Activated CD4-positive, alpha-beta memory T cell treated with anti-CD3 and anti-CD28 coated beads for 36 hours (primary cell): ENCODE measurements at regions of chr4 and their contacts with region 1.

Region 1: GRCh38 chr4:38310446-38311043 is 350.3 kb downstream of the PTTG2 start:
- DNase-seq: peak; percentile 86
- H3K4me3 Mint-ChIP-seq: peak overlapping the region; percentile 12
- H3K27ac Mint-ChIP-seq: peak overlapping the region; percentile 72
- H3K4me1 Mint-ChIP-seq: peaks cover 68% of the 10 kb centered on the region
- H3K27me3 Mint-ChIP-seq: peaks cover 15% of the 10 kb centered on the region

Region 2: DNA sequence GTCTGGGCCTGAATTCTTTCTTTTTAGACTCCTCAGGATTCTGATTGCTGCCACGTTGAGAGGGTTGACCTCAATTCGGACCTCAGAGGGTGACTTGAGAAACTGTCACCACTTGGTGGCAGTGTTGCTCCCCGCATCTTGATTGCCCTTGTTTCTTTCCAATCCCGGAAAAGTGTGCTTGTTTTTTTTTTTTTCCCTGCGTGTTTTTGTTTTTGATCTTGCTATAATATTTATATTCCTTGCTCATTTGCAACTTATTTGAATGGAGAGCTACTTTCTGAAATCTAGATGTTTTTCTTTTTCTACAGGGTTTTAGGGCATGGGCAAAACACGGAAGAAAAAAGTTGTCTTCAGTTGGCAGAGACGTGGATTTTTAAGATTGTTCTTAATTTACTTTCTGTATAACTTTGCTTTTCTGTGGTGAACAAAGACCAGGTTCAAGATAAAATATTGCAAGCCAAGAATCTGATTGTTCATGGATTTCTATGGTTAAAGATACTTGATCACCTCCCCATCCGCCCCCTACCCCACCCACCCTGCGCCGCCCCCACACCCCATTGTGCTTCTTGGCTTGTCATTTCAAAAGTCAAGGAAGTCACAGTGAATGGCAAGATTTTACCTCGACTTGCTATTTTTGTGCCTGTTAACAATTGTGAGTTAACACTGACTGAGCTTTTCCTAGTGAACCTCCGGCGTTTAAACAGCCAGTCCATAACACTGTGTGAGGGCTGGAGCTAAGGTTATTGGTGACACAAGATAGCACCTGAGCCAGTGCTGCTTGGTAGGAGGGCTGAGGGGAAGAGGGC is 248.3 kb before region 1 on chr4:
- CTCF ChIA-PET with region 1: interaction called, 5 read pairs
- POLR2A ChIA-PET with region 1: no interaction called
- intact Hi-C with region 1: loop called (anchors 1 kb)
- DNase-seq: peak; percentile 80
- H3K4me3 Mint-ChIP-seq: peak overlapping the region; percentile 77
- H3K27ac Mint-ChIP-seq: peak overlapping the region; percentile 70
- H3K4me1 Mint-ChIP-seq: peaks cover 14% of the 10 kb centered on the region
- H3K27me3 Mint-ChIP-seq: no peaks in the 10 kb centered on the region

Region 3: GRCh38 chr4:38334810-38335537 is 24.4 kb after region 1 on chr4:
- CTCF ChIA-PET with region 1: no interaction called
- POLR2A ChIA-PET with region 1: no interaction called
- intact Hi-C with region 1: loop called (anchors 1 kb)
- DNase-seq: no peak
- H3K4me3 Mint-ChIP-seq: no peak overlapping the region
- H3K27ac Mint-ChIP-seq: no peak overlapping the region
- H3K4me1 Mint-ChIP-seq: peaks cover 32% of the 10 kb centered on the region
- H3K27me3 Mint-ChIP-seq: peaks cover 30% of the 10 kb centered on the region

Region 4: DNA sequence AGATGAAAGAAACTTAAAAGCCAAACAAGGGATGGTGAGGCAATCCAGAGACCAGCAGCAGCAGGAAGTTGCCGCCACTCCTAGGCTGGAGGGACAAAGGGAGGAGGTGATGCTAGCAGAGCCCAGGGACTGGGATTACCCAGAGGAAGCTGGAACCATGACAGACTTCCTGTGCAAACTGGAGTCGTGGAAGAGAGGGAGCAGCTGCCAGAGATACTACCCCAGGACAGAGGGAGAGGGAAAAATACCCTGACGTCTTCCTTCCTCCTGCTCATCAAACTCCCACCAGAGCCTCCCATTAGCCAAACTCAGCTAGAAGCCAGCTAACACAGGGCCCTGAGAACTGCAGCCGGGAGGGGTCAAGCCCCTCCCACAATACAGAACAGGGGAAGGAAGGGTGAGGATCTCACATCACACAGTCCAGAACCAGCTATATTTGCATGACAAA is 252.2 kb after region 1 on chr4:
- CTCF ChIA-PET with region 1: no interaction called
- POLR2A ChIA-PET with region 1: interaction called, 13 read pairs
- intact Hi-C with region 1: loop called (anchors 2 kb)
- DNase-seq: no peak
- H3K4me3 Mint-ChIP-seq: no peak overlapping the region
- H3K27ac Mint-ChIP-seq: no peak overlapping the region
- H3K4me1 Mint-ChIP-seq: peaks cover 20% of the 10 kb centered on the region
- H3K27me3 Mint-ChIP-seq: peaks cover 18% of the 10 kb centered on the region

Region 5: GRCh38 chr4:38675146-38676121 is 364.9 kb after region 1 on chr4:
- CTCF ChIA-PET with region 1: interaction called, 15 read pairs
- POLR2A ChIA-PET with region 1: no interaction called
- intact Hi-C with region 1: no loop called
- DNase-seq: peak; percentile 89
- H3K4me3 Mint-ChIP-seq: peak overlapping the region; percentile 22
- H3K27ac Mint-ChIP-seq: peak overlapping the region; percentile 19
- H3K4me1 Mint-ChIP-seq: peaks cover 79% of the 10 kb centered on the region
- H3K27me3 Mint-ChIP-seq: no peaks in the 10 kb centered on the region

Region 6: GRCh38 chr4:39032218-39033085 is 721.9 kb after region 1 on chr4 and contains the start of gene TMEM156:
- CTCF ChIA-PET with region 1: no interaction called
- POLR2A ChIA-PET with region 1: no interaction called
- intact Hi-C with region 1: loop called (anchors 5 kb)
- DNase-seq: peak; percentile 71
- H3K4me3 Mint-ChIP-seq: peak within 1 kb of the TSS; percentile 78
- H3K27ac Mint-ChIP-seq: peak within 1 kb of the TSS; percentile 87
- H3K4me1 Mint-ChIP-seq: peaks cover 47% of the 10 kb centered on the region
- H3K27me3 Mint-ChIP-seq: no peaks in the 10 kb centered on the region
- total RNA-seq, gene TMEM156: 28.0 to 28.4 TPM

Region 7: DNA sequence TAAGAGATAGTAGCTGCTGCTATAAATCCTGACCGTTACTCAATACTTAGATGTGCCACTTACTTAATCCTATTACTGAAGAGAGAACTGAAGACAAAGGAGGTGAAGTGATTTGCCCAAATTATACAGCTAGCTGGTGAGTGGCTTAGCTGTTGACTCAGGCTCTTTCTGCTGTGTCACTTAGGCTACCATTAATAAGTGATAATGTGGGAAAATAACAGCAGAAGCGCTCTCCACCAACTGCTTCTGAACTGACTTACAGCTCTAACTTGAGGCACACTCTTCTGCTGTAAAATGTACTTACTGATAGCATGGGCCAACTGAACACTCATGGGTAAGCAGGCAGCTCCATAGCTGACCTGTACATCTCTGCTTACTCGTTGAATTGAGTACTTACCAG is 744.0 kb after region 1 on chr4:
- CTCF ChIA-PET with region 1: no interaction called
- POLR2A ChIA-PET with region 1: no interaction called
- intact Hi-C with region 1: no loop called
- DNase-seq: no peak
- H3K4me3 Mint-ChIP-seq: no peak overlapping the region
- H3K27ac Mint-ChIP-seq: no peak overlapping the region
- H3K4me1 Mint-ChIP-seq: peaks cover 44% of the 10 kb centered on the region
- H3K27me3 Mint-ChIP-seq: no peaks in the 10 kb centered on the region